PC-9 (cell line): ENCODE measurements at regions of chr3 and their contacts with region 1.

Region 1: GRCh38 chr3:32467333-32468070 is 35.1 kb downstream of the CMTM6 start:
- DNase-seq: peak; percentile 42 to 73
- H3K4me3 ChIP-seq: no peak overlapping the region
- H3K27ac ChIP-seq: no peak overlapping the region
- H3K4me1 ChIP-seq: peaks cover 21% of the 10 kb centered on the region
- H3K27me3 ChIP-seq: no peaks in the 10 kb centered on the region
- CTCF ChIP-seq: peak; percentile 80

Region 2: DNA sequence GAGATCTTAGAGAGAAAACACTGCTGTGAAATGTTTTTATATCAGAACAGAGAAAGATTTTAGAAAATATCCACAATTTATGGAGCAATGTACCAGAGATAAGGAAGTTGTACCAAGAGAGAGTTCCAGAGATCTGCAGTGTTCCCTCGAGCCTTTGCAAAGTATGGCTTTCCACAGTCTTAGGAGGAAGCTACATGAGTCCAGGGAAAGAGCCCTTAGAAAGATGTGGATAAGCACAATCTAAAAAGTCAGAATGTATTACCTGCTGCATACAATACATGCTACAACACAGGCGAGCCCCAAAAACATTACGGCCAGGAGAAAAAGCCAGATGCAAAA is 429.6 kb before region 1 on chr3:
- CTCF ChIA-PET with region 1: no interaction called
- POLR2A ChIA-PET with region 1: no interaction called
- intact Hi-C with region 1: no loop called
- DNase-seq: no peak
- H3K4me3 ChIP-seq: no peak overlapping the region
- H3K27ac ChIP-seq: no peak overlapping the region
- H3K4me1 ChIP-seq: peaks cover 15% of the 10 kb centered on the region
- H3K27me3 ChIP-seq: no peaks in the 10 kb centered on the region
- CTCF ChIP-seq: no peak

Region 3: DNA sequence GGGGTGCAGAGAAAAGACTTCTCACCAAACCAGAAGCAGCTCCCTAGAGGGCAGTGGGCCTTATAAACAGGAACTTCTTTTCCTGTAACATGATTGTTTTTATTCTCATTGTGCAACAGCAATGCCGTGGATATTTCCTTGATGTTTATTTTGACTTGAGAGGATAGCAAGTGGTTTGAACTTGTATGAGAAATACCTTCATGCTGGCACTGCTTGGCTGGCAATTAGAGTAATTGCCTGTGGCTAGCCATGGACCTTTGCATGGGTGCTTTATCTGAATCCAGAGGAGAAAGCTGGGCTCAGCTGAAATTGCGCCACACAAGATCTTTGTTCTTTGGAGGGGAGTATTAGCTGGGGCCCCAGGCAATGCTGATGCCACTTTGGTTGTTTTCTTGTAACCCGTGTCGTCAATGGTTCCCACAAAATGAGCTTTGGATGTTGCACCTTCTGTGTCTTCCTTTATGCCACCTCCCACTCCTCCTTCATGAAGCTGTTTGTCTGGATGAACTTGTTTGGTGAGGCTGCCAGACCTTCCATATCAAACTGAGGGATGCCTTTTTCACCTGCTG is 191.1 kb before region 1 on chr3:
- CTCF ChIA-PET with region 1: no interaction called
- POLR2A ChIA-PET with region 1: interaction called, 13 read pairs
- intact Hi-C with region 1: no loop called
- DNase-seq: peak; percentile 61 to 86
- H3K4me3 ChIP-seq: peak overlapping the region; percentile 21; the same call in 1 of the 2 replicates
- H3K27ac ChIP-seq: peak overlapping the region; percentile 89
- H3K4me1 ChIP-seq: peaks cover 56% of the 10 kb centered on the region
- H3K27me3 ChIP-seq: no peaks in the 10 kb centered on the region
- CTCF ChIP-seq: no peak

Region 4: DNA sequence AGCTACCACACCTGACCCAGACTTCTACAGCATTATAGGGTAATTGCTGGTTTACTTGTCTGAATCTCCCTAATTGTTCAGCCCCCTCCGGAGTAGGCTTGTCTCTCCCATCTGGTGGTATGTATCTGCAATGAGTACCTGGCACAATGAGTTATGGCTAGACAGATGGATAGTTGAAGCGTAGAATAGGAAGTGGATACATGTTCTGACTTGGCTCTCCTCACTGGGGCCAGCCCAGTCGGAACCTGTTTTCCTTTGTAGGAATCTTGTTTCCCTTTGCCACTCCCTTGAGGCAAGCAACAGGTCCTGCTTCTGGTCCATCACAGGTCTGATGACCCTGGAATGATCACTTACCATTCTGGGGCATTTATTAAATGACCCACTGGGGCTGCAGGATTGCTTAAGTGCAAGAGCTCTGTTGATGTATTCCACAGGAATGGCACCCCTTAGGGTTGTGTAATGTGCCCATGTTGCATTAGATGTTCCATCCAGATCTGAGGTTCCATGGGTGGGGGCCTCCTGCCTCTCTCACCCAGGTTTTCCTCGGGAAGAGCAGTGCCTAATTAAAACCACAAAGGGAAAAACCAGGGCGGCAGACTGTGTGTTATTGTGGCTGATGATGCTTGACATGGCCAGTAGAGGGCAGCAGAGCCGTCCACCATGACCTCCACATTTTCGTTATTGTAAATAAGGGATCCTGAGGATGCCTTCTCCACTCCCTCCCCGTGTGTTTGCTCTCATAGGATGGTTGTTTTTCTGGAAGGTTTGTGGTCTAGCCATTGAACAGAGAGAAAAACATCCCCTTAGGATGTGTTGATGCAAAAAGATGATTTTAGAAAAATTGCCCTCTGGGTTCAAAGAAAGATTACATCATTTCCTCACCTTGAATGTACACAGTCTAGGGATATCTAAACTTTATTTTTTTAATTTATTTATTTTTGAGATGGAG is 171.0 kb before region 1 on chr3:
- CTCF ChIA-PET with region 1: no interaction called
- POLR2A ChIA-PET with region 1: no interaction called
- intact Hi-C with region 1: loop called (anchors 5 kb)
- DNase-seq: peak in 1 of 2 experiments; percentile 51
- H3K4me3 ChIP-seq: no peak overlapping the region
- H3K27ac ChIP-seq: no peak overlapping the region
- H3K4me1 ChIP-seq: peaks cover 33% of the 10 kb centered on the region
- H3K27me3 ChIP-seq: no peaks in the 10 kb centered on the region
- CTCF ChIP-seq: peak; percentile 80

Region 5: GRCh38 chr3:32374788-32375595 is 92.5 kb before region 1 on chr3:
- CTCF ChIA-PET with region 1: interaction called, 7 read pairs
- POLR2A ChIA-PET with region 1: no interaction called
- intact Hi-C with region 1: loop called (anchors 2 kb)
- DNase-seq: peak in 1 of 2 experiments; percentile 44
- H3K4me3 ChIP-seq: no peak overlapping the region
- H3K27ac ChIP-seq: no peak overlapping the region
- H3K4me1 ChIP-seq: no peaks in the 10 kb centered on the region
- H3K27me3 ChIP-seq: no peaks in the 10 kb centered on the region
- CTCF ChIP-seq: peak; percentile 67

Region 6: GRCh38 chr3:32391643-32392535 is 75.6 kb before region 1 on chr3 and contains the start of gene CMTM7:
- CTCF ChIA-PET with region 1: no interaction called
- POLR2A ChIA-PET with region 1: interaction called, 3 read pairs
- intact Hi-C with region 1: loop called (anchors 5 kb)
- DNase-seq: peak; percentile 54 to 85
- H3K4me3 ChIP-seq: peak within 1 kb of the TSS; percentile 71
- H3K27ac ChIP-seq: peak within 1 kb of the TSS; percentile 44
- H3K4me1 ChIP-seq: 0 out of 2 replicates have a peak, but pooled peaks cover 6% of the 10 kb centered on the region
- H3K27me3 ChIP-seq: no peaks in the 10 kb centered on the region
- CTCF ChIP-seq: no peak
- total RNA-seq, gene CMTM7: 37.1 and 51.6 TPM in 2 replicates

Region 7: GRCh38 chr3:32401556-32402081 is 65.9 kb before region 1 on chr3:
- CTCF ChIA-PET with region 1: no interaction called
- POLR2A ChIA-PET with region 1: interaction called, 3 read pairs
- intact Hi-C with region 1: loop called (anchors 2 kb)
- DNase-seq: peak; percentile 53 to 67
- H3K4me3 ChIP-seq: peak overlapping the region; percentile 58
- H3K27ac ChIP-seq: peak overlapping the region; percentile 83
- H3K4me1 ChIP-seq: peaks cover 21% of the 10 kb centered on the region
- H3K27me3 ChIP-seq: no peaks in the 10 kb centered on the region
- CTCF ChIP-seq: no peak

Region 8: GRCh38 chr3:32630266-32630665 is 162.8 kb after region 1 on chr3:
- CTCF ChIA-PET with region 1: no interaction called
- POLR2A ChIA-PET with region 1: no interaction called
- intact Hi-C with region 1: no loop called
- DNase-seq: peak in 1 of 2 experiments; percentile 61
- H3K4me3 ChIP-seq: no peak overlapping the region
- H3K27ac ChIP-seq: no peak overlapping the region
- H3K4me1 ChIP-seq: peaks cover 7% of the 10 kb centered on the region
- H3K27me3 ChIP-seq: no peaks in the 10 kb centered on the region
- CTCF ChIP-seq: no peak